ENCODE measurements at regions of chr6 and their contacts with region 1.

Region 1: DNA sequence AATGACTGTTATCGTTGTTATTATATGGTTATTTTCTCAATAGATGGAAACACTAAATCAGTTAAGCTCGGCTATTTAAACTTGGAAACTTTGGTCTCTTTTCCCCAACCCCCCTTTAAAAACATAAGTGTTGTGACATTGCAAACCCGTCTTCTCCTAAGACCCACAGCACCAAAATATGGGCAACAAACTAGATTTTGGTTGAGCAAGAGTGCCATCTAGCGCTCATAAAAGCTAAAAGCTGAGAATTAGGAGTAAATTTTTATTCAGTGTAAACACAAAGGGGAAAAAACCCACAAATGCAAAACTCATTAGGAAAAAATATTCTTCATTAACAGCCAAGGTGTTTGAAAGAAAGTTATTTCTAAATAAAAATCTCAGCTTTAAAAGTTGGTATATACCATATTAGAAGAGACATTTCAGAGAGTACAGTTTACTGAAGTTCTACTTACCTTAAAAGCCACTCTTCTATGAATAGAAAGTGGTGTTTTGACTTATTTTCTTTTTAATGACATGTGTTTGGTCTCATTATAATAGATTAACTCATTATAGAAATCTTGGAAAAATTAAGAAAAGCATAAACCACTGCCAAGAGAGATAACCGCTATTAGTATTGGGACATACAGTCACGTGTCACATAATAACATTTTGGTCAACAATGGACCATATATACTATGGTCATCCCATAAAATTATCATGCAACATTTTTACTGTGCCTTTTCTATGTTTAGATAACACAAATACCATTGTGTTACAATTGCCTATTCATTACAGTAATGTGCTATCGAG is 21.1 kb downstream of the SESN1 start:
- DNase-seq: peak in 30 of 35 experiments; percentile 13 to 89 (median 44)
- ATAC-seq: peak; percentile 52 to 72 (median 70)
- H3K4me3 ChIP-seq: no peak overlapping the region
- H3K4me3 Mint-ChIP-seq: peak overlapping the region in 1 of 3 donors; percentile 7
- H3K27ac ChIP-seq: no peak overlapping the region
- H3K27ac Mint-ChIP-seq: no peak overlapping the region
- H3K4me1 ChIP-seq: peaks cover 9 to 18% of the 10 kb centered on the region in 2 experiments
- H3K4me1 Mint-ChIP-seq: peaks cover 32 to 39% (median 37%) of the 10 kb centered on the region in 3 donors
- H3K27me3 ChIP-seq: no peaks in the 10 kb centered on the region
- H3K27me3 Mint-ChIP-seq: no peaks in the 10 kb centered on the region

Region 2: DNA sequence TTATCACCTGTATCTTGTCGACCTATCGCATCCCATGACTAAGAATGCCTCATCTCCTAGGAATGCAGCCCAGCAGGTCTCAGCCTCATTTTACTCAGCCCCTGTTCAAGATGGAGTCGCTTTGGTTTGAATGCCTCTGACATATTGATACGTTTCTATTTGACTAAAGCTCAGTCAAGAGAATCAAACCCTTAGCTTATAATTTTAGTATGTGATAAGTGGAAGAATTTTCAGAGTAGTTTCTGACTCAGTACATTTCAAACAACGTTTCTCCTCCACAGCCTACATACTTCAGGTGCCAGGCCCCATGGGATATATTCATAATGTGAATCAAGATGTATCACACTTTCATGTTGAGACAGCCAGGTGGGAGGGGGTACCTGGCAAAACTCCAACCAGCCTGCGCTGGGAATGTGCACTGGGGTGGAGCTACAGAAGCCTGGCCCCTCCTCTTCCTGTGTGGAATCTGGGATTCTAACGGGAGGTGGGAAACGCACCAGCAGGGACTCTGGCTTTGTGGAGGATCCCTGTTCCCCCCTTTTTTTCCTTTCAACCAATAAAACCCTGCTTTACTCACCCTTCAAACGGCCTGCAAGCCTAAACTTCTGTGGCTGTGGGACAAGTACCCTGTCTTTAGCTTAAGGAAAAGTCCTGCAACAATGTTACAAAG is 1108.7 kb before region 1 on chr6:
- CTCF ChIA-PET with region 1: no interaction called
- POLR2A ChIA-PET with region 1: no interaction called
- DNase-seq: no peak
- ATAC-seq: no peak
- H3K4me3 ChIP-seq: no peak overlapping the region
- H3K4me3 Mint-ChIP-seq: no peak overlapping the region
- H3K27ac ChIP-seq: no peak overlapping the region
- H3K27ac Mint-ChIP-seq: no peak overlapping the region
- H3K4me1 ChIP-seq: no peaks in the 10 kb centered on the region
- H3K4me1 Mint-ChIP-seq: no peaks in the 10 kb centered on the region
- H3K27me3 ChIP-seq: peaks cover 0 to 3% of the 10 kb centered on the region in 2 experiments
- H3K27me3 Mint-ChIP-seq: no peaks in the 10 kb centered on the region

Region 3: DNA sequence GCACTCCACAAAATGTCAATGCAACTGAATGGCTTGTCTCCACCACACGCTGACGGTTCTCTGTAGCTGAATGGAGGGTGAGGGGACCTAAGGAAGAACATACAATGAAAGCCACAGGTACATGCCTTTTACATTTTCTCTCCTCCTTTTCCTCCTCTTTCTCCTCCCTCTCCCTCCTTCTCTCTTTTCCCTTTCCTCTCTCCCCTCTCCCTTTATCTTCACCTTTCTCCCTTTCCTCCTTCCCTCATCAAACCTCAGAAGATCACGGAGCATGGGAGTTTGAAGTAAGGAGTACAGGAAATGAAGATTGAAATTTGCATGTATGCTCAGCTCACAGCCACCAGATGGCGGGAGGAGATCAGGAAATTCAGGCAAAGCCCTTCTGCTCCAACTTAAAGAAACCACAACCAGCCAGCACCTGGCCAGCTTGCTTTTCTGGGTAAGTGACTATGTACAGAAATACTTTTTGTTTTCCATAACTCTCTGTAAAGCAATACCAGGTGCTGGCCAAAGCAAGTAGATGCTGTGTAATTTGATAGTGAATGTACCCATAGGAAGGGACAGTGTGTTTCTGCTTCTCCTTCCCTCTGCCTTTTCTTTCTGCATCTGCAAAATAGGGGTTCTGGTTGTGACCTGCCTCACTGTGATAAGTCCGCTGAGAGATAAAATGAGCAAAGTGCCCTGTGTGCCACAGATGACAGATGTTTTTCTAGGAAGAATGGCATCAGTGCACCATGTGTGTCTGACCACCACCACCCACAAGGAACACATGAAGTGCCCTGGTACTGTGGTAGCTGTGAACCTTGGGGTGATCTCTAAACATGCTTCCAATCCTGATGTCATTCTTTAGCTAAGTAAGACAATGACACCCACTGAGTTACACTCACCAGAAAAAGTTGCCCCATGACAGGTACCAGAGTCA is 531.4 kb before region 1 on chr6:
- CTCF ChIA-PET with region 1: interaction called, 32 to 105 read pairs
- POLR2A ChIA-PET with region 1: interaction called in 1 of 2 experiments, 3 read pairs
- DNase-seq: peak; percentile 40 to 88 (median 63)
- ATAC-seq: peak; percentile 67 to 89 (median 80)
- H3K4me3 ChIP-seq: no peak overlapping the region
- H3K4me3 Mint-ChIP-seq: no peak overlapping the region
- H3K27ac ChIP-seq: no peak overlapping the region
- H3K27ac Mint-ChIP-seq: no peak overlapping the region
- H3K4me1 ChIP-seq: peaks cover 8 to 19% of the 10 kb centered on the region in 2 experiments
- H3K4me1 Mint-ChIP-seq: peaks cover 12 to 18% (median 16%) of the 10 kb centered on the region in 3 donors
- H3K27me3 ChIP-seq: peaks cover 0 to 3% of the 10 kb centered on the region in 2 experiments
- H3K27me3 Mint-ChIP-seq: peaks cover 0 to 8% of the 10 kb centered on the region in 2 donors

Region 4: DNA sequence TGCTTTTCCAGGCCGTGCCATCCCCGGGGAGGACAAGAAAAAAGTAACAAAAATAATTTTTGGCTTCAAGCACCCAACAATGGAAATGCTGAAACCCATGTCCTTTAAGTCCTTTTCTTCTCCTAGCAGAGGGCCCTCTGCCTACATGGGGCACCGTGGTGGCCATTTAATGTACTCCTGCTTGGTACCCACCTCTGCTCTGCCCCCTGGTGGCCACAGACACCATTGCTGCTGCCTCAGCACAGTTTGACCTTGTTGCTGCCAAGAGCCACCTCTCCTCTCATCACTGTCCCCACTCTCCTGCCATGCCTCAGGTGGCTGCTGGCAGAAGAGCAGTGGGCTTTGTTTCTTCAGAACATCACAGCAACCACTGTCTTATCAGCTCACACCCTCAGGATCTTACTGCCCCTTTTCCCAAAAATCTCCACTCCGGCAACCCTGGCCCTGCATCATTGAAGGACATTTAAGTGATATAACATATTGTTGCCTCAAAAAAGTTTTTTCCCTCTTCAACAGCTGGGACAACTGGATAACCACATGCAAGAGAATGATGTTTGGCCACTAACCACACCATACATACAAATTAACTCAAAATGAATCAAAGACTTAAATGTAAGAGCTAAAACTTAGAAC is 238.2 kb before region 1 on chr6:
- CTCF ChIA-PET with region 1: interaction called, 4 to 18 read pairs
- POLR2A ChIA-PET with region 1: no interaction called
- DNase-seq: peak; percentile 57 to 91 (median 81)
- ATAC-seq: peak; percentile 95 to 99 (median 98)
- H3K4me3 ChIP-seq: no peak overlapping the region
- H3K4me3 Mint-ChIP-seq: no peak overlapping the region
- H3K27ac ChIP-seq: no peak overlapping the region
- H3K27ac Mint-ChIP-seq: peak overlapping the region; percentile 48 to 63
- H3K4me1 ChIP-seq: peaks cover 7 to 27% of the 10 kb centered on the region in 2 experiments
- H3K4me1 Mint-ChIP-seq: peaks cover 18 to 36% (median 20%) of the 10 kb centered on the region in 3 donors
- H3K27me3 ChIP-seq: no peaks in the 10 kb centered on the region
- H3K27me3 Mint-ChIP-seq: no peaks in the 10 kb centered on the region

Region 5: GRCh38 chr6:109009236-109009961 is 64.1 kb before region 1 on chr6:
- CTCF ChIA-PET with region 1: interaction called, 5 to 77 read pairs
- POLR2A ChIA-PET with region 1: interaction called, 5 to 8 read pairs
- DNase-seq: peak; percentile 84 to 97 (median 91)
- ATAC-seq: peak; percentile 96 to 99 (median 97)
- H3K4me3 ChIP-seq: peak overlapping the region; percentile 97
- H3K4me3 Mint-ChIP-seq: peak overlapping the region; percentile 83 to 98 (median 97)
- H3K27ac ChIP-seq: peak overlapping the region; percentile 96
- H3K27ac Mint-ChIP-seq: peak overlapping the region; percentile 98 to 99
- H3K4me1 ChIP-seq: peaks cover 17 to 39% of the 10 kb centered on the region in 2 experiments
- H3K4me1 Mint-ChIP-seq: peaks cover 67 to 80% (median 68%) of the 10 kb centered on the region in 3 donors
- H3K27me3 ChIP-seq: no peaks in the 10 kb centered on the region
- H3K27me3 Mint-ChIP-seq: no peaks in the 10 kb centered on the region

Region 6: DNA sequence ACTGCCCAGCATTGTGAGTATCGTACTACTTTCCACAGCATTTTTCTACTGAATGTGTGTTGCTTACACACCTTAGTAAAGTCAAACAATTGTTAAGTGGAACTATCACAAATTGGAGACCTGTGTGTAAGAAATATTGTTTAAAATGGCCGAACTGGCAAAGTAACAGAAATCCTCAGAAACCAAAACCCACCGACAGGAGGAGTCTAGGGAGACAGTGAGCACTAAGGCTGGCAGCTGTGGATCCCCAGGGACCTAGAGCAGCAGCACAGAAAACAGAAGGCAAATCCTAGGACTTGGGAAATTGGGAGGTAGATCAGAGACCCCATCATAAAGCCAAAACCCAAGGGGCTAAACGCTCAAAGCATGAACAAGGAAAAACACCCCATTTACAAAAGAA is 48.8 kb before region 1 on chr6:
- CTCF ChIA-PET with region 1: no interaction called
- POLR2A ChIA-PET with region 1: no interaction called
- DNase-seq: no peak
- ATAC-seq: no peak
- H3K4me3 ChIP-seq: no peak overlapping the region
- H3K4me3 Mint-ChIP-seq: no peak overlapping the region
- H3K27ac ChIP-seq: no peak overlapping the region
- H3K27ac Mint-ChIP-seq: peak overlapping the region in 1 of 2 donors; percentile 29
- H3K4me1 ChIP-seq: peaks cover 4 to 7% of the 10 kb centered on the region in 2 experiments
- H3K4me1 Mint-ChIP-seq: peaks cover 48 to 53% (median 48%) of the 10 kb centered on the region in 3 donors
- H3K27me3 ChIP-seq: no peaks in the 10 kb centered on the region
- H3K27me3 Mint-ChIP-seq: no peaks in the 10 kb centered on the region

Region 7: DNA sequence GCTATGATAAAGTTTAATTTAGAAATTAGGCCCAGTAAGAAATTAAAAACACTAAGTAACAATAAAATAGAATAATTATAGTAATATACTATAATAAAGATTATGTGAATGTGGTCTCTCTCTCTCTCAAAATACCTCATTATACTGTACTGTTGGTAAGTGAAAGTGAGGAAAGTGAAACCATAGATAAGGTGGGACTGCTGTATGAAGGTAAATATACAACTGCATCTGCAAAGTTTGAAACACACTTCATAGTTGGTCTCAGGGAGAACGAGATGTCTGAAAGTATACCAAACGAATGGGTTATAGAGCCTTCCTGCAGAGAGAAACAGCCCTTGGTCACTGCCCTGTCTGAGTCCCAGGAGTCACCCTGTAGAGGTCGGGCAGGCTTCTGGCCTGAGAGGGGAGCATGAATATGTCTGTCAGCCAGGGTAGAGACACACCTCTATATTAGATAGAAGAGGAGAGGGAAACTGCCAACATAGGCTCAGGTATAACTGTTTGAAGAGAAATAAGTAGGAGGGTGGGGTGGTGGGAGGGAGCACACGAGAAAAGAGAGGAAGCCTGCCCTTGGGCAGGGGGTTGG is 10.7 kb before region 1 on chr6:
- CTCF ChIA-PET with region 1: interaction called, 4 to 12 read pairs
- POLR2A ChIA-PET with region 1: interaction called in 1 of 2 experiments, 3 read pairs
- DNase-seq: no peak
- ATAC-seq: peak in 2 of 4 experiments; percentile 21 to 30
- H3K4me3 ChIP-seq: no peak overlapping the region
- H3K4me3 Mint-ChIP-seq: peak overlapping the region in 1 of 3 donors; percentile 46
- H3K27ac ChIP-seq: no peak overlapping the region
- H3K27ac Mint-ChIP-seq: peak overlapping the region; percentile 53 to 76
- H3K4me1 ChIP-seq: peaks cover 14 to 16% of the 10 kb centered on the region in 2 experiments
- H3K4me1 Mint-ChIP-seq: peaks cover 55 to 73% (median 68%) of the 10 kb centered on the region in 3 donors
- H3K27me3 ChIP-seq: no peaks in the 10 kb centered on the region
- H3K27me3 Mint-ChIP-seq: no peaks in the 10 kb centered on the region